K562 (cell line): ENCODE measurements at regions of chr19 and their contacts with region 1.

Region 1: DNA sequence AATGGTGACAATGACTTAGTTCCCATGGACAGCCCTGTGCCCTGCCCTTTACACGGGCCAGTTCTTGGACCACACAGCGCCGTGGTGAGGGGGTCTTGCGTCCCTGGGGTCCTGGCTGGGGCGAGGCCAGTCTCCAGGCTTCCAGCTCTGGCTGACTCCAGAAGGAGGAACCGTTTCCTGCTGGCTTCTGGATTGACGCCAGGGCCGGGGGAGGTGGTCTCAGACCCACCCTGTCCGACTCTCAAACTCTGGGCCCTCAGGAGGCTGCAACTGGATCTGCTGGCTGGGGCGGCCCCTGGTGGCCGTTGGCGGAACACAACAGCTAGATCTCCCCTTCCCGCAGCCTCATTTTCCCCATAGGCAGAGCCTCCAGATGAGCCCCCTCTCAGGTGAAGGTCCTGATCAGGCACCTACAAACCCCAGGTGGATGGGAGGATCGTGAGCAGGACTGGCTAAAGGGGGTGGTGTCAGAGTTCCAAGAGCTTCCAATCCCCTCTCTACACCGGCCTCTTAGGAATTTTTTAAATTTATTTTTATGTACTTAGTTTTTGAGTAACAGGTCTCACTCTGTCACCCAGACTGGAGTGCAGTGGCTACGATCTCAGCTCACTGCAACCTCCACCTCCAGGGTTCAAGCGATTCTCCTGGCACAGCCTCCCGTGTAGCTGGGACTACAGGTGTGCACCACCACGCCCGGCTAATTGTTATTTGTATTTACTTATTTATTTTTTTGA is 8.0 kb downstream of the CCDC194 start:
- DNase-seq: peak; percentile 75 to 78 (median 76)
- ATAC-seq: peak; percentile 80
- H3K4me3 ChIP-seq: no peak overlapping the region
- H3K27ac ChIP-seq: no peak overlapping the region
- H3K4me1 ChIP-seq: peaks cover 7 to 15% of the 10 kb centered on the region in 2 experiments; a peak in 3 of 5 replicates
- H3K27me3 ChIP-seq: no peaks in the 10 kb centered on the region
- CTCF ChIP-seq: peak; percentile 89 to 97 (median 95)
- EP300 ChIP-seq: no peak
- POLR2A ChIP-seq: no peak
- RAD21 ChIP-seq: peak; percentile 71 to 85

Region 2: DNA sequence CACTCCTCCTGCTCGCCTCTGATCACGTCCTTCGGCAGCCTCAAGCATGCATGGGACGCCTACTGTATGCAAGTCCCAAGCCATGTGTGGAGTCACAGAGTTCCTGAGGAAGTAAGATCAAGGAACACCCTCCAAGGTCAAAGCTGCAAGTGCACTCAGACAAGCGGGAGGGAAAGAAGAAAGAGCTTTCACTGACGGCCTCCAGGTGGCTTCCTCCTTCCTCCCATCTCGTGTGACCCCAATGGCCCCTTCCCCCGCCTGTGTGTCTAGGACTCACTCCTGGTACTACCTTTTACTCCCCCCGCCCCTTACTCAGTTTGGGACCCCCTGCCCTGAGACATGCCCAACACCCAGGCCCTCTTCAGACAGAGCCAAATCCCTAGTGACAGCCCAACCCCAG is 316.8 kb before region 1 on chr19:
- CTCF ChIA-PET with region 1: no interaction called
- POLR2A ChIA-PET with region 1: no interaction called
- in situ Hi-C with region 1: loop called (anchors 10 kb)
- intact Hi-C with region 1: no loop called
- DNase-seq: no peak
- ATAC-seq: 0 out of 3 replicates have a peak, but pooled peaks have one; percentile 8
- H3K4me3 ChIP-seq: no peak overlapping the region
- H3K27ac ChIP-seq: no peak overlapping the region
- H3K4me1 ChIP-seq: peaks cover 7 to 10% of the 10 kb centered on the region in 2 experiments; a peak in 4 of 5 replicates
- H3K27me3 ChIP-seq: no peaks in the 10 kb centered on the region
- CTCF ChIP-seq: peak in 1 of 3 experiments; percentile 18; a peak in 2 of 6 replicates
- EP300 ChIP-seq: no peak
- POLR2A ChIP-seq: no peak
- RAD21 ChIP-seq: no peak

Region 3: GRCh38 chr19:17346109-17346671 is 39.9 kb before region 1 on chr19:
- CTCF ChIA-PET with region 1: interaction called, 5 read pairs
- POLR2A ChIA-PET with region 1: no interaction called
- in situ Hi-C with region 1: loop called (anchors 5 kb)
- intact Hi-C with region 1: loop called (anchors 1 kb)
- DNase-seq: peak; percentile 86 to 89 (median 88)
- ATAC-seq: peak; percentile 99
- H3K4me3 ChIP-seq: no peak overlapping the region
- H3K27ac ChIP-seq: no peak overlapping the region
- H3K4me1 ChIP-seq: peaks cover 0 to 12% of the 10 kb centered on the region in 2 experiments; a peak in 1 of 5 replicates
- H3K27me3 ChIP-seq: peaks cover 3 to 17% of the 10 kb centered on the region in 2 experiments; a peak in 3 of 5 replicates
- CTCF ChIP-seq: peak; percentile 88 to 95 (median 90)
- EP300 ChIP-seq: no peak
- POLR2A ChIP-seq: no peak
- RAD21 ChIP-seq: peak; percentile 76 to 91

Region 4: GRCh38 chr19:17405250-17406038 is 19.4 kb after region 1 on chr19 and contains the start of gene BST2:
- CTCF ChIA-PET with region 1: no interaction called
- POLR2A ChIA-PET with region 1: no interaction called
- in situ Hi-C with region 1: no loop called
- intact Hi-C with region 1: no loop called
- DNase-seq: peak; percentile 73 to 92 (median 84)
- ATAC-seq: peak; percentile 91
- H3K4me3 ChIP-seq: peak within 1 kb of the TSS; percentile 53
- H3K27ac ChIP-seq: peak within 1 kb of the TSS; percentile 69
- H3K4me1 ChIP-seq: peaks cover 12 to 36% of the 10 kb centered on the region in 2 experiments; a peak in 4 of 5 replicates
- H3K27me3 ChIP-seq: no peaks in the 10 kb centered on the region
- CTCF ChIP-seq: no peak
- EP300 ChIP-seq: no peak
- POLR2A ChIP-seq: peak; percentile 91
- RAD21 ChIP-seq: no peak
- polyA plus RNA-seq, gene BST2: 11.2 to 69.8 TPM